ENCODE measurements at regions of chr4 and their contacts with region 1.

Region 1: GRCh38 chr4:1266881-1267763 is 18.2 kb upstream of the CTBP1 start:
- DNase-seq: no peak
- H3K4me3 ChIP-seq: no peak overlapping the region
- H3K27ac ChIP-seq: no peak overlapping the region
- H3K4me1 ChIP-seq: no peaks in the 10 kb centered on the region
- H3K27me3 ChIP-seq: no peaks in the 10 kb centered on the region
- CTCF ChIP-seq: no peak

Region 2: DNA sequence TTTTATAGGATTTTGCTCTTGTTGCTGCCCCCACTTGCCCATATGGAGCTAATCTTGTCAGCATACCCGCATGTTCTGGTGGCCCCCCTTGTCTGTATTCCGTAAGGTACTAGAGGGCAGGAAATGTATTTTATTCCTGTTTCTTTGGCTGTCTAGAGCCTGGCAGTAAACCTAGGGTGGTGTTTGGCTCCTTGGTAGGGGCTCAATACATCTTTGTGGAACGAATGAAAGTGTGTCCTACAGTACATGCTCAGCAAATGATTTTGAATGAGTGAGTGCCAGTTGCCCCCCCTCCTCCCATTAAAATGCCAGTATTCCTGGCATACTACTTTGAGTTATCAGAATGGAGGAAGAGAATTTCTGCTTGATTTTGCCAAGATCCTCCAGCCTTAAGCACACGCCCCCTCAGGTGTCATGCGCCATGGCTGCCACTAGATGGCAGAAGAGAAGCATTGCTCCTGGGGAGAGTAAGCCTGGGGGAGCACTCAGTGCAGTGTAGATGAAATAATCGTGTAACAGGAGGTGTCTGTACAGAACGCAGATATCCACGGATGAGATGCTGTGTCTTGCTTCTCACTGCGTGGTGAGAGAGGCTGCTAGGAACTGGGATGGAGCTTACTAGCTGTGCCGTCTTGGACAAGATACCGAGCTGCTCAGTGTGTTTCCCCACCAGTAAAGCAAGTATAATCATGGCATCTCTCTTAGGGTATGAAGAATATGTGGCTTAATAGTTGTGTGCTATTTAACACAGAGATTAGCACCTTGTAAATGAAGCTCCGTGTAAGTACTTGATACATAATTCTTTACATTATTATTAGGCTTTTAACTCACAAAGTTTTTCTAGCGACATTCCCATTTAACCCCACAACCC is 136.6 kb before region 1 on chr4:
- CTCF ChIA-PET with region 1: interaction called, 3 read pairs
- POLR2A ChIA-PET with region 1: no interaction called
- intact Hi-C with region 1: loop called (anchors 1 kb)
- DNase-seq: peak; percentile 82
- H3K4me3 ChIP-seq: no peak overlapping the region
- H3K27ac ChIP-seq: no peak overlapping the region
- H3K4me1 ChIP-seq: no peaks in the 10 kb centered on the region
- H3K27me3 ChIP-seq: peaks cover 15% of the 10 kb centered on the region
- CTCF ChIP-seq: peak; percentile 99